Caco-2 (cell line): ENCODE measurements at regions of chr13 and their contacts with region 1.

Region 1: GRCh38 chr13:113792886-113793717 is 34.1 kb downstream of the TMEM255B start:
- DNase-seq: peak in 1 of 2 experiments; percentile 30
- H3K4me3 ChIP-seq: no peak overlapping the region
- H3K4me3 Mint-ChIP-seq: no peak overlapping the region
- H3K27ac Mint-ChIP-seq: no peak overlapping the region
- H3K4me1 ChIP-seq: peaks cover 22% of the 10 kb centered on the region; the same call in 1 of the 2 replicates
- H3K4me1 Mint-ChIP-seq: peaks cover 7% of the 10 kb centered on the region
- H3K27me3 ChIP-seq: no peaks in the 10 kb centered on the region
- H3K27me3 Mint-ChIP-seq: no peaks in the 10 kb centered on the region
- CTCF ChIP-seq: no peak

Region 2: GRCh38 chr13:112978561-112979405 is 814.3 kb before region 1 on chr13:
- CTCF ChIA-PET with region 1: no interaction called
- POLR2A ChIA-PET with region 1: no interaction called
- intact Hi-C with region 1: loop called (anchors 5 kb)
- DNase-seq: no peak
- H3K4me3 ChIP-seq: no peak overlapping the region
- H3K4me3 Mint-ChIP-seq: no peak overlapping the region
- H3K27ac Mint-ChIP-seq: no peak overlapping the region
- H3K4me1 ChIP-seq: peaks cover 9% of the 10 kb centered on the region
- H3K4me1 Mint-ChIP-seq: peaks cover 4% of the 10 kb centered on the region
- H3K27me3 ChIP-seq: no peaks in the 10 kb centered on the region
- H3K27me3 Mint-ChIP-seq: no peaks in the 10 kb centered on the region
- CTCF ChIP-seq: no peak

Region 3: DNA sequence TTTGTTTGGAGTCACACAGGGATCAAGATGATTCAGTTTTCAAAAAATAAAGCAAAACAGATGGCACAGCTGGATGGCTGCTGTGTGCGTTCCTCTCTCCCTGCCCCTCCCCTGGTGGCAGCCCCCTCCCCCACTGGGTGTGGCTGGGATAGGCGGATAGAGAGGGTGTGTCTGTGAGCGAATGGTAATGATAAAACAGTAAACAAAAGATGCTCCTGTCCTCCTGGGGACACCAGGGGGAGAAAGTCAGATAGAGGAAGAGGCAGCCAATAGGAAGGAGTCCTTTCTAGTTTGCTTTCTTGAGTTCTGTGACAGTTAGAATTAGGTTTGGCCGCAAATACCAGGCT is 27.6 kb before region 1 on chr13:
- CTCF ChIA-PET with region 1: no interaction called
- POLR2A ChIA-PET with region 1: no interaction called
- intact Hi-C with region 1: no loop called
- DNase-seq: no peak
- H3K4me3 ChIP-seq: no peak overlapping the region
- H3K4me3 Mint-ChIP-seq: no peak overlapping the region
- H3K27ac Mint-ChIP-seq: no peak overlapping the region
- H3K4me1 ChIP-seq: no peaks in the 10 kb centered on the region
- H3K4me1 Mint-ChIP-seq: peaks cover 5% of the 10 kb centered on the region
- H3K27me3 ChIP-seq: no peaks in the 10 kb centered on the region; the same call in 1 of the 2 replicates
- H3K27me3 Mint-ChIP-seq: peaks cover 14% of the 10 kb centered on the region
- CTCF ChIP-seq: no peak